ENCODE measurements at regions of chr18 and their contacts with region 1.

Region 1: DNA sequence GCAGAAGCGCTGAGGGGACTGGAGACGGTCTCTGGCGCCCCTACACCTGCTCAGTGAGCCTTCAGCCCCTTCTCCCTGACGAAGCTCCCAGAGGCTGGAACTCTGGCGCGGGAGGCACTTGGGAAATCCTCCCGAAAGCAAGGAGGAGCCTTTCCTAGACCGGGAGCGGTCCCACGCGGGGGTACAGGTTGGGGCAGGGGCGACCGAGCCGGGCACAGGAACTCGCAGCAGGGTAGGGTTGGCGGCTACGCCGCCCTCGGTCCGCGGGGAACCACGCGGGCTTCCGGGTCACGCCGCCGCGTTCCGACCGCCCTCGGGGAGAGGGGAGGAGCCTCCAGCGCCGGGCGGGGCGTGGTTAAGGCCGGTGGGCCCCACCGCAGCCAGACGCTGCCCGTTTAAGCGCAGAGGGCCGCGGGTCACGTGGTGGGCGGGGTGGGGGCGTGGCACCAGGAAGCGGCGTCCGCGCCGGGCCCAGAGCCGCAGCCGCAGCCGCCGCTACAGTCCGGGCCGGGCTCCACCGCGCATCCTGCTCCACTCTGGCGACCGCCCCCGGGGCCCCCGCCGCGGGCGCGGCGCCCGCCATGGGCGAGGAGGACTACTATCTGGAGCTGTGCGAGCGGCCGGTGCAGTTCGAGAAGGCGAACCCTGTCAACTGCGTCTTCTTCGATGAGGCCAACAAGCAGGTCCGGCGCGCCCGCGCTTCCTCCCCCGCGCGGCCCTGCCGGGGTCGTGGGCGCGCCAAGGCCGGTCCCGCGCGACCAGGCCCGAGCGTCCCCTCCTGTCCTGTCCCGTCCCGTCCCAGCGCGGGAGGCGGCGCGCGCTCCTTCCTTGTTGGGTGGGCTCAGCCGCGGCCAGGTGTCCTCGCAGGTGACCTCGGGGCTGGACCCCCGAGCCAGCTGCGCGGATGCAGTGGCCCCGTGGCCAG is at the start of gene RMC1:
- DNase-seq: peak; percentile 45
- H3K4me3 ChIP-seq: peak within 1 kb of the TSS; percentile 83
- CTCF ChIP-seq: no peak

Region 2: DNA sequence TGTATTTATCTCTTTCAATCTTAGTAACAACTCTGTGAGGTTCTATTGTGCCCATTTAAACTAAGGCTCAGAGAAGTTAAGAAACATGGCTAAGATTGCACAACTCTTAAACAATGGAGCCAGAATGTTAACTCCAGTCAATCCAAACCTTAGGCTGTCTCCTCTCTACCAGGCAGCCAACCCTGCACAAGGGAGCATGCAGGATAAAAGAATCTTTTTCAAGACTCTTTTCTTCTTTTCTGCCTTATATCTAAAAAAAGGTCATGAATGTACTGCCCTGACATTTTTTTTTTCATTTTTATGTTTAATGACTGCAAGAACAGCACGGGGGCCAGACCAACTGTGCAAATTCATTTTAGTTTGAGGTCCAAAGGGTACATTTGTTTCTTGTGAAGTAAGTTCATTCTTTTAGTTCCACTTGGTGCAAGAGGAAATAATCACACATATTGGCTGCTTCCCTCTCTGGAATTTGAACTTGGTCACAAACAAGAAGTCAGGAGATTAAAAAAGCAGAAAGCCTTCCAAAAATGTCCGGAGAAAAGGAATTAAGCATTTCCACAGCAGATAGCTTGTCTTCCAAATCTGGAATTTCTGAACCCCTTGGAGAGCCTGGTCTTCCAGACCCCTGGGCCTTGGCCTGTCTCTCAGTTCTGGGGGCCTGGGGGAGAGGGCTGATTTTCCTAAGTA is 146.2 kb before region 1 on chr18:
- CTCF ChIA-PET with region 1: no interaction called
- POLR2A ChIA-PET with region 1: no interaction called
- DNase-seq: peak; percentile 79
- H3K4me3 ChIP-seq: no peak overlapping the region
- CTCF ChIP-seq: no peak

Region 3: GRCh38 chr18:23487738-23488570 is 15.3 kb before region 1 on chr18:
- CTCF ChIA-PET with region 1: interaction called, 53 read pairs
- POLR2A ChIA-PET with region 1: no interaction called
- DNase-seq: no peak
- H3K4me3 ChIP-seq: no peak overlapping the region
- CTCF ChIP-seq: no peak

Region 4: GRCh38 chr18:23586249-23587196 is 83.2 kb after region 1 on chr18 and contains the start of gene NPC1:
- CTCF ChIA-PET with region 1: interaction called, 14 read pairs
- POLR2A ChIA-PET with region 1: no interaction called
- DNase-seq: no peak
- H3K4me3 ChIP-seq: peak within 1 kb of the TSS; percentile 90
- CTCF ChIP-seq: peak; percentile 92

Measured in AG04449 (cell line).